B cell (primary cell): ENCODE measurements at regions of chr19 and their contacts with region 1.

Region 1: DNA sequence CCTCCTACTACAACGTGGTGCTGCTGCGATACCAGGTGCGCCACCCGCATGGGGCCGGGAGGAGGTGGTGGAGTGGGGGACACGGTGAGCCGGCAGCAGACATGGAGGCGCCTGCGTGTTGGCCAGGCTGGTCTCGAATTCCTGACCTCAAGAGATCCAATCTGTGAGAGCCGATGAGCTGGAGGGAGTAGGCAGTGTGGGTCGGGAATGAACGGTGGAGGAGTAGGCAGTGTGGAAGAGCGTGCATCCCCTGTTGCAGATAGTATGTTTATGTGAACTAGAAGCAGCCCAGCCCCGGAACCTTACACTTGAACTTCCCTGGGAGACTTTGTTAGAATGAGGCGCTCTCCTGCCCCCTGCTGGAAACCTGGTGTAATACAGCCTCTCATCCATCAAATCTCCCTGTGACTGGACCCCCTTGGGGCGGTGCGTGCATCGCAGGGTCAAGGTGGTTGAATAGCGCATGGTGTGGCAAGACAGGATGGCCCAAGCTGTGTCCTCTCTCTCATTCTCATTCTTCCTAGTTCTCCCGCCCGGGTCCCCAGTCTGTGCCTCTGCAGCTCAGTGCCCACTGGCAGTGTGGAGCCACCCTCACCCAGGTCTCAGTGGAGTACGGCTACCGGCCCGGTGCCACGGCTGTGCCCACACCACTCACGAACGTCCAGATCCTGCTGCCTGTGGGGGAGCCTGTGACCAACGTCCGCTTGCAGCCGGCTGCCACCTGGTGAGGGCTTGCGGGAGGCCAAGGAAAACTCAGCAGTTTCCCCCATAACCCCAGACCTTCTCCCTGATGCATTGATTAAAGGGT is 10.5 kb upstream of the B3GNT3 start:
- DNase-seq: peak; percentile 83
- ATAC-seq: peak; percentile 86
- H3K4me3 ChIP-seq: no peak overlapping the region
- H3K4me3 Mint-ChIP-seq: no peak overlapping the region
- H3K27ac ChIP-seq: no peak overlapping the region
- H3K27ac Mint-ChIP-seq: peak overlapping the region; percentile 51
- H3K4me1 ChIP-seq: peaks cover 0 to 6% of the 10 kb centered on the region in 2 donors
- H3K4me1 Mint-ChIP-seq: peaks cover 5% of the 10 kb centered on the region
- H3K27me3 ChIP-seq: no peaks in the 10 kb centered on the region
- H3K27me3 Mint-ChIP-seq: no peaks in the 10 kb centered on the region
- CTCF ChIP-seq: peak; percentile 85

Region 2: GRCh38 chr19:17519967-17520366 is 264.4 kb before region 1 on chr19:
- CTCF ChIA-PET with region 1: no interaction called
- POLR2A ChIA-PET with region 1: no interaction called
- intact Hi-C with region 1: no loop called
- DNase-seq: no peak
- ATAC-seq: no peak
- H3K4me3 ChIP-seq: no peak overlapping the region
- H3K4me3 Mint-ChIP-seq: no peak overlapping the region
- H3K27ac ChIP-seq: no peak overlapping the region
- H3K27ac Mint-ChIP-seq: peak overlapping the region; percentile 59
- H3K4me1 ChIP-seq: peaks cover 30 to 34% of the 10 kb centered on the region in 2 donors
- H3K4me1 Mint-ChIP-seq: peaks cover 36% of the 10 kb centered on the region
- H3K27me3 ChIP-seq: no peaks in the 10 kb centered on the region
- H3K27me3 Mint-ChIP-seq: no peaks in the 10 kb centered on the region
- CTCF ChIP-seq: no peak

Region 3: DNA sequence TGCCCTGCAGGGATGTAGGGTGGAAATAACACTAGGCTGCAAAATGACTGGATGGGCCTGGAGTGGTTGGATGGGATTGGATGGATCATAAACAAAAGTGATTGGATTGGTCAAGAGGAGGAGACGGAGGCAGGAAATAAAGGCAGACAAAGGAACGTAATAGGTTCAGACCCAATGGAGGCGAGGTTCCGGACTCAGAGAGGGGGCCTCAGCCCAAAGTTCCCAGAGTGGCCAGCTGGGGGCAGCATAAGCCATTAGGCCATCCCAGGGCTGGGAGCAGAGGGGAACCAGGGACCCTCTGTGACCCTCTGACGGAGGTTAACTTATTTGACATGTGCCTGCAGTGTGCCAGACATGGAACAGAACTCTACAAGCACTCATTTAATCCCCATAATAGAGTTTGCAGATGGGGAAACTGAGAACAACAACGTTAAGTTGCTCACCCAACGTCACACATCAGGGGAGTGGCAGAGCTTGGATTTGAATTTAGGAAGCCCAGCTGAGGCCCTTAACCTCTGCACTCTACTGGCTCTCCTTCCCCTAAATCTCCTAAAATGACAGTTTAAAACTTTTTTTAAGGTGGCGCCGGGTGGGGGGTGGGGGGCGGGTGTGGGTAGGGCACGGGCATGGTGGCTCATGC is 80.5 kb before region 1 on chr19:
- CTCF ChIA-PET with region 1: interaction called, 75 read pairs
- POLR2A ChIA-PET with region 1: no interaction called
- intact Hi-C with region 1: loop called (anchors 1 kb)
- DNase-seq: peak; percentile 80
- ATAC-seq: peak; percentile 93
- H3K4me3 ChIP-seq: no peak overlapping the region
- H3K4me3 Mint-ChIP-seq: no peak overlapping the region
- H3K27ac ChIP-seq: no peak overlapping the region
- H3K27ac Mint-ChIP-seq: peak overlapping the region; percentile 11
- H3K4me1 ChIP-seq: no peaks in the 10 kb centered on the region
- H3K4me1 Mint-ChIP-seq: peaks cover 5% of the 10 kb centered on the region
- H3K27me3 ChIP-seq: peaks cover 0 to 9% (median under 1%) of the 10 kb centered on the region in 4 experiments
- H3K27me3 Mint-ChIP-seq: peaks cover 11% of the 10 kb centered on the region
- CTCF ChIP-seq: peak; percentile 87